Colonic mucosa (tissue), 4 donors: ENCODE measurements at regions of chr3 and their contacts with region 1.

Region 1: GRCh38 chr3:116770815-116771450 is 61.4 kb downstream of the TUSC7 start:
- DNase-seq: peak; percentile 67
- H3K4me3 ChIP-seq: no peak overlapping the region
- H3K27ac ChIP-seq: no peak overlapping the region
- H3K4me1 ChIP-seq: no peaks in the 10 kb centered on the region
- H3K27me3 ChIP-seq: no peaks in the 10 kb centered on the region
- CTCF ChIP-seq: peak; percentile 75

Region 2: DNA sequence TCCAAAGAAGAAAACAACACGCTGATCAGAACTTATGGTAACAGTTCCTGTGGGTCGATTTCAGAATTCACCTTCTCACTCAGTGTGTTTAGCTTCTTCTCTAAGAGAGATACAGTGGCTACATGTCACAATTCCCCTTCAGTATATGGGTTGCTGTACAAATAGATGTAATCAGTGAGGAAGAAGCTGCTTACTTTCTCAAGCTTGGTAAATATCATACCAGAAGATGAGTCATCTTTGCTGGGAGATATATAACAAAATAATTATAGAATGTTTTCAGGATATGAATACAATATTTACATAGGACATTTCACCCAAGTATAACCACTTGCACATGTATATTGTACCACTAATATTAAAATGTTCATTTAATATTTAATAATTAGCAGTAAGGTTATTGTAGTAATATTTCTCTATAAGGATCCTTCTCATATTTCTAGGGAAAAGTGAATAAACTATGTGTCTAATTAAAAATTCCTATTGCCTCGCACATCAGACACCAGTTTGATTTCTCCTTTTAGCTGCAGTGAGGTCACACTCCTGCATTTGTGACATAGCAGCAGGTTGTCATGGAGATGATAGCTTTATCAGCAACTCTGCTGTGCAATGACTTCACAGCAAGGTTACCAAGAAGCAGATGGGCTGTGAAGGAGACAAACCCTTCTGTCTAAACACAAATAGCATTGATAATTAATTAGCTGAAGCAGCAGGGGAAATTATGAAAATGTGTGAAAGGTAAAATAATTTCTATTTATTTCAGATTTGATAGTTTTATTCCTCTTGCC is 150.1 kb after region 1 on chr3:
- intact Hi-C with region 1: no loop called
- DNase-seq: no peak
- H3K4me3 ChIP-seq: no peak overlapping the region
- H3K27ac ChIP-seq: no peak overlapping the region
- H3K4me1 ChIP-seq: no peaks in the 10 kb centered on the region
- H3K27me3 ChIP-seq: no peaks in the 10 kb centered on the region
- CTCF ChIP-seq: no peak

Region 3: GRCh38 chr3:117526470-117527079 is 755.6 kb after region 1 on chr3:
- intact Hi-C with region 1: loop called (anchors 10 kb)
- DNase-seq: peak; percentile 27
- H3K4me3 ChIP-seq: no peak overlapping the region
- H3K27ac ChIP-seq: no peak overlapping the region
- H3K4me1 ChIP-seq: no peaks in the 10 kb centered on the region
- H3K27me3 ChIP-seq: no peaks in the 10 kb centered on the region
- CTCF ChIP-seq: peak; percentile 59

Region 4: GRCh38 chr3:117719316-117719926 is 948.5 kb after region 1 on chr3:
- intact Hi-C with region 1: loop called (anchors 5 kb)
- DNase-seq: no peak
- H3K4me3 ChIP-seq: no peak overlapping the region
- H3K27ac ChIP-seq: no peak overlapping the region
- H3K4me1 ChIP-seq: no peaks in the 10 kb centered on the region
- H3K27me3 ChIP-seq: no peaks in the 10 kb centered on the region
- CTCF ChIP-seq: peak; percentile 60